ENCODE measurements at regions of chr4 and their contacts with region 1.

Region 1: DNA sequence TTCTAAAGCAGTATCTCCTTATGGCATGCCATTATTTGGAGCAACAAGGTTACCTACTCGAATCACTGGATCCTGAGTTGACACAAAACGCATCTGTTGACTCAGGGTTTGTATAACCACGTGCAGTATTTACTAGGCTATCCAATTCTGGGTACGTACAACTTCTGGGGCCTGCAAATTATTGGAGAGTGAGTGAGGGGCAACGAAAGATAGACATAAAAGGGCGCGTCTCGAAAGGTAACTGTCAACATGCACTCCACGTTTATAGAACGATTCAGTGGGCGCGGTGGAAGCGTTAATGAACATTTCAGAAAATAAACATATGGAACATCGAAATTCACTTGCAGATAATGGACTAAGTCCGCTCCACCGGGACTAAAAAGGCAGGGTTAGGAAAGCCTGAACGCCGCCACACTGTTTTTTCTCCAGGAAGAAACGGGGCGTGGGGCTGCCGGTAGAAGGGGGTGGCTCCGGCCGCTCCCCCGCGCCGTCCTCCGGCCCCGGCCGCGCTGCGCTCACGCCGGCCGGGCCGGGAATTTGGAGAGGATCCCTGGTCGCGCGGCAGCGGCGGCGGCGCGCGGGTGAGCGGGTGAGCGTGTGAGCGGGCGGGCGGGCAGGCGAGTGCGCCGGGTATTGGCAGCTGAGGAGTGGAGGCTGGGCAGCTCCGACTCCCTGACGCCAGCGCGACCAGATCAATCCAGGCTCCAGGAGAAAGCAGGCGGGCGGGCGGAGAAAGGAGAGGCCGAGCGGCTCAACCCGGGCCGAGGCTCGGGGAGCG is at the start of gene SMAD1:
- H3K4me3 Mint-ChIP-seq: no peak within 1 kb of the TSS
- H3K27ac Mint-ChIP-seq: no peak within 1 kb of the TSS
- H3K4me1 Mint-ChIP-seq: peaks cover 20% of the 10 kb centered on the region
- H3K27me3 Mint-ChIP-seq: no peaks in the 10 kb centered on the region

Region 2: DNA sequence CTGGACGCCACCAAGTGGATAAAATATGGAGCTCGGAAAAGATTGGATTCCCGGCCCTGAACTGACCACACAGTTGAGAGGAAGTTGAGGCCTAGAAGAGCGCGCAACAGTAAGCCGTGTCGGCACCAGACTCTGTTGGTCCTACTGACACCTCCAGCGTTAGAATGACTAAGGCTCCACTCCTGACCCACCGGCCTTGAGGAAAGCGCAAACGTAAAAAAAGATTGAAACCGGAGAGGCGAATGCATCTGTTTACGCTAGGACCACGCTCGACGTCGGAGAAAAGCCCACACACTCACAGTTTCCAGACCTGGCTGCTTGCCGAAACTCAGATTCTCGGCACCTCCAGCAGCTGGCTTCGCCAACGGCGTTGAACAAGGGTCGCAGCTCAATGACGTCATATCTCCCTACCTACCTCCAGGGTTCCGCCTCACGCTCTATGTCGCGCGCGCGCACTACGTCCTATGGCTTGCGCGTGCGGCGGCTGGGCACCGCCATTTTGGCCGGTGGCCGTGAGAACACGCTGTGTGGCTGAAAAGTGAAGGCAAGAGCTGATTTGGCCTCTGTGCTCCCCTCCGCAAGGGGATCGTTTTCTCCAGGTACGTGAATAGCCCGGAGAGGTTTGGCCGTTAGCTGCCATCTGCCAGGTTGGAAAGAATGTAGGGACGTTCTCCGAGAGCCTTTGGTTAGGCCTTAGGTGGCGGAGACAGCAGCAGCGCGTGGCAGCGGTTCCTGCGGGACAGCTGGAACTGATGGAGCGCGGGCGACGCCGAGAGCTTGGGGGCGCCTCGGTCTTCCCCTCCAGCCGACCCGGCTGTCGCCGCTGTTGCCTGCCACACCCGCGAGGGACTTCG is 383.3 kb before region 1 on chr4 and contains the starts of genes ABCE1 and ANAPC10:
- intact Hi-C with region 1: loop called (anchors 10 kb)
- H3K4me3 Mint-ChIP-seq: peak within 1 kb of the TSS; percentile 93
- H3K27ac Mint-ChIP-seq: peak within 1 kb of the TSS; percentile 99
- H3K4me1 Mint-ChIP-seq: peaks cover 25% of the 10 kb centered on the region
- H3K27me3 Mint-ChIP-seq: no peaks in the 10 kb centered on the region

Region 3: DNA sequence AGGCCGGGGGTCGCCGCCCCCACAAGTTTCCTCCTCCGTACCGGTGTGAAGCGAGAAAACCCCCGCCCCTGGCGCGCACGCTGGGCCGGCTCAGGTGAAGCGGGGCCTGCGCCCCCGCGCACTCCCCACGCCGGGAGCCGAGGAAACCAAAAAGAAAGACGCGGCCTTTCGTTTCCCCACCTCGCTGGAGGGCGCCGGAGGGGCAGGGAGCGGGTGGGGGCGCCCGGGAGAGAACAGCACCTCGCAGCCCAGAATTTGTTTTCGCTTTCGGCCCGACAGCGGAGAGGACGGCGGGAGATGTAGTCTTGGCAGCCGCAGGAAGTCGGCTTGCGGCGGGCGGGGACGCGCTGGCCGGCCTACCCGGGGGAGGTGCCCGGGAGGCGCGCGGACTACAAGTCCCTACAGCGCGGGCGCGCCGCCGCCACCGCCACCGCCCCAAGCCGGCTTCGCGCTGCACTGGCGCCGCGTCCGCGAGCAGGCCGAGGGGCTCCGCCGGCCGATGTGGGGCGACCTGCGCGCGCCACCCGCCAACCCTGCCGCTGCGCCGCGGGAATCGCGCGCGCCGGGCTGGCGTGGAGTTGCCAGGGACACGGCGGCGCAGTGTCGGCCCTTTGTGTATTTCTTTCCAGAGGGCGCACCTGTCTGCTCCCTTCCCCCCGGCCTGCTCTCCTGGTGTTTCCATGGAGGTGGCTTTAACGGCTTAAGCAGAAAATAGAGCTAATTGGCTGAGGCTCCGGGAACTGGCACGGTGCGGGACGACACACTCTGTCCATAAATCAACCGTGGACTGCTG is 300.9 kb before region 1 on chr4 and contains the start of gene OTUD4:
- intact Hi-C with region 1: loop called (anchors 5 kb)
- H3K4me3 Mint-ChIP-seq: peak within 1 kb of the TSS; percentile 80
- H3K27ac Mint-ChIP-seq: peak within 1 kb of the TSS; percentile 89
- H3K4me1 Mint-ChIP-seq: peaks cover 28% of the 10 kb centered on the region
- H3K27me3 Mint-ChIP-seq: peaks cover 13% of the 10 kb centered on the region

Region 4: DNA sequence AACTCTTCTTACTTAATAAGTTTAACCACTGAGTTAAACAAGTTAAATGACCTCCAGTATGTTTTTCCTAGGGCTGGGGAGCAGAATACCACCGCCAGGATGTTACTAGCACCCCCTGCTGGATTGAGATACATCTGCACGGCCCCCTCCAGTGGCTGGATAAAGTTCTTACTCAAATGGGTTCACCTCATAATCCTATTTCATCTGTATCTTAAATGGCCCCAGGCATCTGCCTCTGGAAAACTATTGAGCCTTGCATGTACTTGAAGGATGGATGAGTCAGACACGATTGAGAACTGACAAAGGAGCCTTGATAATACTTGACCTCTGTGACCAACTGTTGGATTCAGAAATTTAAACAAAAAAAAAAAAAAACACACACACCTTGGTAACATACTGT is 76.4 kb after region 1 on chr4:
- intact Hi-C with region 1: loop called (anchors 10 kb)
- H3K4me3 Mint-ChIP-seq: no peak overlapping the region
- H3K27ac Mint-ChIP-seq: no peak overlapping the region
- H3K4me1 Mint-ChIP-seq: peaks cover under 1% of the 10 kb centered on the region
- H3K27me3 Mint-ChIP-seq: no peaks in the 10 kb centered on the region